ENCODE measurements at regions of chr6 and their contacts with region 1.

Region 1: DNA sequence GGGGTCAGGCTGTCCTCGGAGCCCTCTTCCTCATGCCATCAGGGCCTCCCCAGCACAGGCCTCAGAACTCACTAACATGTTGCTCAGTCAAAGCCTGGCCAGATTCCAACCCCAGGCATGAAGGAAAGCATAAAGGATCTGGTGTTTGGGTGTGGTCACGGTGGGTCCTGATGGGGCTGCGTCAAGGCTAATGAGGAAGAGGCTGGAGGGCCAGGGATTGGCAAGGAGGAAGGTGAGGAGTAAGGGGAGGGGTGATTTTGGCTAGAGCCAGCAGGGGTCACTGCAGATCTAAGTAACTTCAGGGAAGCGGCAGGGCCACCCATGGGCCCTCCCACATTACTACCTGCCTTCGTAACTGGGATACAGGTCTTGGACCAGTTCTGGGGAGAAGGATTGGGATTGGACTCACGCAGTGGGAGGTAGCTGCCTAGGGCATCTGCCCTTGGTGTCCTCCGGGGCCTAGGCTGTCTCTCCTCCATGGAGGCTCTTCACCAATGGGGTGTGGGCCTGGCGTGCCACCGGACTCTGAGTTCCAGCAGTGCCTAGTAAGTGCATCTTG is 36.2 kb upstream of the MRPS18A start:
- DNase-seq: peak; percentile 55
- H3K4me3 Mint-ChIP-seq: no peak overlapping the region
- H3K27ac Mint-ChIP-seq: no peak overlapping the region
- H3K4me1 Mint-ChIP-seq: peaks cover 25% of the 10 kb centered on the region
- H3K27me3 Mint-ChIP-seq: peaks cover 12% of the 10 kb centered on the region

Region 2: GRCh38 chr6:43774776-43775534 is 51.1 kb after region 1 on chr6:
- intact Hi-C with region 1: loop called (anchors 2 kb)
- DNase-seq: peak; percentile 57
- H3K4me3 Mint-ChIP-seq: peak overlapping the region; percentile 62
- H3K27ac Mint-ChIP-seq: no peak overlapping the region
- H3K4me1 Mint-ChIP-seq: peaks cover 48% of the 10 kb centered on the region
- H3K27me3 Mint-ChIP-seq: no peaks in the 10 kb centered on the region